MCF 10A (cell line): ENCODE measurements at regions of chrX and their contacts with region 1.

Region 1: GRCh38 chrX:133921764-133922389 is 63.5 kb downstream of the GPC3 start:
- DNase-seq: peak; percentile 48
- H3K4me3 Mint-ChIP-seq: no peak overlapping the region
- H3K27ac Mint-ChIP-seq: no peak overlapping the region
- H3K4me1 Mint-ChIP-seq: peaks cover 5% of the 10 kb centered on the region
- H3K27me3 Mint-ChIP-seq: peaks cover 66% of the 10 kb centered on the region
- CTCF ChIP-seq: peak; percentile 54

Region 2: DNA sequence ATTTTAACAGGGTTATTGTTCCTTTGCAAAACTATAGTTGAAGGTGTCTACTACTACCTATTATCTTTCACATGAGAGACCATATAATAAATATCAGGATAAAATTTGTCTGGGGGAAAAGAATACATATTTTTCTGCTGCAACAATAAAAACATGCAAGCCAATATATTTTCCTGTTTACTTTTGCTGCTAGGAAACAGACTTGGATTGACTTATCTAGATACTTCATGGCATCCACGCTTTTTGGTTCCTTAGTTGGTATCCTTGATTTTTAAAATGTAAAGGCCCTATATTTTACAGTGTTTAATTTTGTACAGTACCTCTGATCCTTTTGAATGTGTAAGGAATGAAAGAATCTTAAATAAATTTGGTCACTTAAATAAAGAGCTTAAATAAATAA is 87.1 kb before region 1 on chrX:
- CTCF ChIA-PET with region 1: interaction called, 10 read pairs
- POLR2A ChIA-PET with region 1: no interaction called
- intact Hi-C with region 1: no loop called
- DNase-seq: no peak
- H3K4me3 Mint-ChIP-seq: no peak overlapping the region
- H3K27ac Mint-ChIP-seq: no peak overlapping the region
- H3K4me1 Mint-ChIP-seq: no peaks in the 10 kb centered on the region
- H3K27me3 Mint-ChIP-seq: peaks cover 41% of the 10 kb centered on the region
- CTCF ChIP-seq: no peak

Region 3: GRCh38 chrX:133935071-133935470 is 13.2 kb after region 1 on chrX:
- CTCF ChIA-PET with region 1: interaction called, 14 read pairs
- POLR2A ChIA-PET with region 1: no interaction called
- intact Hi-C with region 1: no loop called
- DNase-seq: no peak
- H3K4me3 Mint-ChIP-seq: no peak overlapping the region
- H3K27ac Mint-ChIP-seq: no peak overlapping the region
- H3K4me1 Mint-ChIP-seq: no peaks in the 10 kb centered on the region
- H3K27me3 Mint-ChIP-seq: peaks cover 37% of the 10 kb centered on the region
- CTCF ChIP-seq: no peak

Region 4: GRCh38 chrX:134020910-134021309 is 99.0 kb after region 1 on chrX:
- CTCF ChIA-PET with region 1: interaction called, 13 read pairs
- POLR2A ChIA-PET with region 1: no interaction called
- intact Hi-C with region 1: loop called (anchors 2 kb)
- DNase-seq: peak; percentile 24
- H3K4me3 Mint-ChIP-seq: no peak overlapping the region
- H3K27ac Mint-ChIP-seq: no peak overlapping the region
- H3K4me1 Mint-ChIP-seq: no peaks in the 10 kb centered on the region
- H3K27me3 Mint-ChIP-seq: peaks cover 20% of the 10 kb centered on the region
- CTCF ChIP-seq: peak; percentile 19